Heart right ventricle (tissue), 16 donors: ENCODE measurements at regions of chr12 and their contacts with region 1.

Region 1: GRCh38 chr12:53352331-53353256 is 16.4 kb upstream of the SP7 start:
- DNase-seq: peak; percentile 64 to 87
- ATAC-seq: peak; percentile 94 to 98 (median 97)
- H3K4me3 ChIP-seq: no peak overlapping the region
- H3K27ac ChIP-seq: no peak overlapping the region
- H3K4me1 ChIP-seq: peaks cover 0 to 11% (median 0%) of the 10 kb centered on the region in 9 donors
- H3K27me3 ChIP-seq: no peaks in the 10 kb centered on the region
- CTCF ChIP-seq: peak; percentile 83 to 95 (median 90)

Region 2: DNA sequence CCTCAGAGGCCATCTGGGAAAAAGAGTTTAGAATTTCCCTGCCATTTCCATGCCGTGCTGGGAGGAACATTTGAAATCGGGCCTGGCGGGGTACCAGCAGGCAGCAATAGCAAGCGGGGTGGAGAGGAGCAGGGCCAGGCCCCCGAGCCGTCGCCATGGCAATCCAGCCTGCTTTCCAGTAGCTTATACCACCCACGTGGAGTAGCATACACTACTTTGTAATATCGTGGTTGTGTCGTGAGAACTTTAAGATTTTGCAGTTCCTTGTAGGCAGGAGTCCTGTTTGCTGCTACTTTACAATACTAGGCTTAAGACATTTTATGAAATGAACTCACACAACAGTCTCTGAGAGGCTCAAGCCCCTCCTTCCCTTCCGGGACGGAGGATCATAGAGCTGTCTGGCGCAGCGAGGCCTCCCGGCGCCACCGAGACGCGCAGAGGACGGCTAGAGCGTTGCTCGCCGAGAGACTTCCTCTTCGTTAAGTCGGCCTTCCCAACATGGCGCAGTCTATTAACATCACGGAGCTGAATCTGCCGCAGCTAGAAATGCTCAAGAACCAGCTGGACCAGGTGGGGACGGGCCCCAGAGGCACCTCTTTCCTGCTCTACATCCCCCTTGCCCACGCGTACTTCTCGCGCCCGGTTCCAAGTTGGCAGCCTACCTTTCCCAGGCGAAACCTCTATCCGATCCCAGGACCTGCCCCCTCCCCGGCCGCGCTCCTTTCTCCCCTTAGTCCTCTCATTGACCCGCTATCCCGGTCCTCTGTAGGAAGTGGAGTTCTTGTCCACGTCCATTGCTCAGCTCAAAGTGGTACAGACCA is 57.3 kb before region 1 on chr12 and contains the start of gene PFDN5:
- intact Hi-C with region 1: no loop called
- DNase-seq: peak; percentile 87 to 91
- ATAC-seq: peak; percentile 89 to 94 (median 92)
- H3K4me3 ChIP-seq: peak within 1 kb of the TSS; percentile 69 to 93 (median 82)
- H3K27ac ChIP-seq: peak within 1 kb of the TSS; percentile 14 to 93 (median 89)
- H3K4me1 ChIP-seq: peaks cover 11 to 48% (median 40%) of the 10 kb centered on the region in 9 donors
- H3K27me3 ChIP-seq: no peaks in the 10 kb centered on the region
- CTCF ChIP-seq: peak in 3 of 9 donors; percentile 11 to 25 (median 23)
- total RNA-seq, gene PFDN5: 307 to 413 (median 339) TPM

Region 3: DNA sequence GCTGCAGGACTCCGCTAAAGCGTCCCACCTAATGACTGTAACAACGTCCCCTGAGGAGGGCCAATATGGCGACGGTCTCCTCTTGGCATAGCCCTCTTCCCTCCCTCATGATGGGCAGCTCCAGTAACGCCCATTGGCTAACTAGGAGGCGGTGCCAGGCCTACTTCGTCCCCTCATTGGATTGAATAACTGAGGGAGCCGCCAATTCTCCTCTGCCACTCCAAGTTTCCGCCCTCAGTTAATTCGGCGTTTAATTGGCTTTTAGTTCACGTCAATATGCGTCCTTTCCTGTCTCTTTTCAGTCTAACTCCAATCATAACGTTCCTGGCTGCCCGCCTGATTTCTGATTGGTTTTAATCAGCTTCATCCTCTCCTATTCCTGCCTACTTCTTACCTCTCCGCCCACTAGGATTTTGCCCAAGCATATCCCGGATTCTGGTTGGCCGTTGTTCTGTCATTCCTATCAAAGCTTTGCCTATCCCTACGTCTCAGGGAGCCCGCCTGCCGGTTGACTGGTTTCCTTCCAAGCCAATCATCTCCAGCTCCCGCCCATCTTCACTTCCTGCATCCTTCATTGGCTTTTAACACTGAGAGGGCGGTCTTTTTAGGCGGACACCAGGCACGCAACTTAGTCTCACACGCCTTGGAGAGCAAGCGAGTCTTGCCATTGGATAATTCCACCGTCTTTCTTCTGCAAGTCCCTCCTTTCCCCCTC is 27.0 kb after region 1 on chr12:
- intact Hi-C with region 1: loop called in 1 of 10 experiments (anchors 2 kb)
- DNase-seq: peak; percentile 92 to 100
- ATAC-seq: peak; percentile 84 to 92 (median 90)
- H3K4me3 ChIP-seq: peak overlapping the region; percentile 44 to 88 (median 64)
- H3K27ac ChIP-seq: peak overlapping the region; percentile 92 to 99 (median 98)
- H3K4me1 ChIP-seq: peaks cover 18 to 46% (median 44%) of the 10 kb centered on the region in 9 donors
- H3K27me3 ChIP-seq: no peaks in the 10 kb centered on the region
- CTCF ChIP-seq: no peak

Region 4: DNA sequence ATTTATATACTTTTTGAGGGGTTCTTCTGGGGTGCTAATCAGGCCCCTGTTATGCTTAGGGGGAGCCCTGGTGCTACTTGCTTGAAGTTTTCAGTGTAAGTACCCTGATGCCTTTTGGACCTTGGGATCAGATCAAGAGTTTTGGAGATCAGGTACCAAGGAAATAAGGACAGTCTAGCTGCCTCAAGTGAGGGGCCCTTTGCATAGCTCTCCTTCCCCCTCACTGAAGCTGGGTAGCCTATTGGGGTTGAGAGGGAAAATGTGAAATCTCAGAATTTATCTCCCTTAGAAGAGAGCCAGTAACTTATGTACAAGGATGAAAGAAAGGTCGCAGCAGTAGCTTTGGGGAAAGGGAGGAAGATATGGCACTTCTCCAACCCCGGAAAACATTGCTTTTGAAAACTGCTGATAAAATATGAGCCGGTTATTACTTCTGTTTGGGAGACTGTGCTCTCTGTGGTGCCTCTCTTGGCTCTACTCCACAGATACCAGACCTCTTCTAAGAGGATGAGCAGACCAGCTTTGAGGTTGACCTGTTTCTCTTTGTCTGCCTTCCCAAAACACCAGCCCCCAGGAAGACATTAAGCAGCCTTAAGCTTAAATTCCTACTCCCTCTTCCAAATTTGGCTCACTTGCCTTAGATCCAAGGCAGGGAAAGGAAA is 62.3 kb after region 1 on chr12:
- intact Hi-C with region 1: loop called in 4 of 10 experiments (anchors 2 to 5 kb)
- DNase-seq: no peak
- ATAC-seq: peak in 2 of 8 donors; percentile 4 to 19
- H3K4me3 ChIP-seq: no peak overlapping the region
- H3K27ac ChIP-seq: peak overlapping the region in 3 of 10 donors; percentile 11 to 62 (median 23)
- H3K4me1 ChIP-seq: peaks cover 15 to 56% (median 39%) of the 10 kb centered on the region in 9 donors
- H3K27me3 ChIP-seq: no peaks in the 10 kb centered on the region
- CTCF ChIP-seq: no peak

Region 5: DNA sequence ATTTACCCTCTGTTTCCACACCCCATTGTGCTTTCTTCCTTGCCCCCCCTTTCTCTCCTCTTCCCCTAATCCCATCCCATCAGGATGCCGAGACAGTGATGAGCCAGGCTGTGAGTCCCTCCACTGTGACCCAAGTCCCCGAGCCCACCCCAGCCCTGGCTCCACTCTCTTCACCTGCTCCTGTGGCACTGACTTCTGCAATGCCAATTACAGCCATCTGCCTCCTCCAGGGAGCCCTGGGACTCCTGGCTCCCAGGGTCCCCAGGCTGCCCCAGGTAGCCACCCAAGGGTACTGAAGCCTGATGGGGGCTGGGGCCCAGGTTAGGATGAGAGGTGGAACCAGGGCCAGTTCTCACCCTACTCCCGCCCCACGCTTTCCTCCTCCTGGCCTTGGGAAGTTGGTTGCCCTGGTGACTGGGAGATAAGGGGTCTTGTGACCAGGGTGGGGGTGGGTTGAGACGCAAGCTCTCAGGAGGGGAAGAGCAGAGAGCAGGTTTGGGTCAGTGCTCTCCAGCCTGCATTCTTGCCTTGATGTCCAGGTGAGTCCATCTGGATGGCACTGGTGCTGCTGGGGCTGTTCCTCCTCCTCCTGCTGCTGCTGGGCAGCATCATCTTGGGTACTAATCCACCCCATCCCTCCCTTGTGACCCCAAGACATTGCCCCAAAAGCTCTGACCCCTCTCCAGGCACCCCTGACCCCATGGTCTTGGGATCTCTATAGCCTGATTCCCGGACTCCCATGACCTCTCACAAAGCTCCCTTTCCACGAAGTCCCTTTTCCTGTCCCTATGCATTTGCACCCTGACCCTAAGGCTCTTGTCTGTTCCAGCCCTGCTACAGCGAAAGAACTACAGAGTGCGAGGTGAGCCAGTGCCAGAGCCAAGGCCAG is 72.3 kb after region 1 on chr12:
- intact Hi-C with region 1: loop called (anchors 1 to 5 kb)
- DNase-seq: no peak
- ATAC-seq: peak in 1 of 8 donors; percentile 4
- H3K4me3 ChIP-seq: no peak overlapping the region
- H3K27ac ChIP-seq: no peak overlapping the region
- H3K4me1 ChIP-seq: peaks cover 0 to 11% (median 8%) of the 10 kb centered on the region in 9 donors
- H3K27me3 ChIP-seq: no peaks in the 10 kb centered on the region
- CTCF ChIP-seq: no peak

Region 6: GRCh38 chr12:53500776-53501614 is 148.4 kb after region 1 on chr12 and contains the start of gene TARBP2:
- intact Hi-C with region 1: loop called in 5 of 10 experiments (anchors 5 to 10 kb)
- DNase-seq: peak; percentile 96 to 99
- ATAC-seq: peak; percentile 87 to 93 (median 89)
- H3K4me3 ChIP-seq: peak within 1 kb of the TSS; percentile 44 to 87 (median 74)
- H3K27ac ChIP-seq: peak within 1 kb of the TSS; percentile 96 to 99 (median 97)
- H3K4me1 ChIP-seq: peaks cover 15 to 55% (median 33%) of the 10 kb centered on the region in 9 donors
- H3K27me3 ChIP-seq: no peaks in the 10 kb centered on the region
- CTCF ChIP-seq: peak in 3 of 9 donors; percentile 17 to 26 (median 21)
- total RNA-seq, gene TARBP2: 7.0 to 13.7 (median 11.0) TPM

Region 7: GRCh38 chr12:53508534-53509199 is 156.1 kb after region 1 on chr12:
- intact Hi-C with region 1: loop called (anchors 1 to 10 kb)
- DNase-seq: peak; percentile 86 to 88
- ATAC-seq: peak; percentile 77 to 91 (median 89)
- H3K4me3 ChIP-seq: no peak overlapping the region
- H3K27ac ChIP-seq: peak overlapping the region in 9 of 10 donors; percentile 17 to 74 (median 44)
- H3K4me1 ChIP-seq: peaks cover 0 to 14% (median 10%) of the 10 kb centered on the region in 9 donors
- H3K27me3 ChIP-seq: no peaks in the 10 kb centered on the region
- CTCF ChIP-seq: peak; percentile 86 to 96 (median 93)